ENCODE measurements at regions of chr2 and their contacts with region 1.

Region 1: DNA sequence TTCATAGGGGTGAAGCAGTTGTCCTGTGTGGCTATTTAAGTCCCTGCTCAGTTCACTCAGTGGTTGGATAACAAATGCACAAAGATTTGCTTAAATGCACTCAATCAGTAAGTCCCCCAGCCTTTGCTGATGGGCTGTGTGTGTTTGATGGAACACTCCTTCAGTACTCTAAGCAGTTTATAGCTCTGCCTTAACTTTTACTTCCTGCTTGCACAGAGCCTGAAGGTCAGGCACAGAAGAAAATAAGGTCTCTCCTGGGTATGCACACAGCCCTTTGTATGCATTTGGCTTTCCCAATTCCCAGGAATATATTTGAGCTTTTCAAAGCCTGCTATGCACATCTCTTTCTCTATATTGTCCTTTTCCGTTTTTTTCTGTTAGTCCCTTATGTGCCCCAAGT is 208.7 kb upstream of the STK17B start:
- DNase-seq: no peak

Region 2: DNA sequence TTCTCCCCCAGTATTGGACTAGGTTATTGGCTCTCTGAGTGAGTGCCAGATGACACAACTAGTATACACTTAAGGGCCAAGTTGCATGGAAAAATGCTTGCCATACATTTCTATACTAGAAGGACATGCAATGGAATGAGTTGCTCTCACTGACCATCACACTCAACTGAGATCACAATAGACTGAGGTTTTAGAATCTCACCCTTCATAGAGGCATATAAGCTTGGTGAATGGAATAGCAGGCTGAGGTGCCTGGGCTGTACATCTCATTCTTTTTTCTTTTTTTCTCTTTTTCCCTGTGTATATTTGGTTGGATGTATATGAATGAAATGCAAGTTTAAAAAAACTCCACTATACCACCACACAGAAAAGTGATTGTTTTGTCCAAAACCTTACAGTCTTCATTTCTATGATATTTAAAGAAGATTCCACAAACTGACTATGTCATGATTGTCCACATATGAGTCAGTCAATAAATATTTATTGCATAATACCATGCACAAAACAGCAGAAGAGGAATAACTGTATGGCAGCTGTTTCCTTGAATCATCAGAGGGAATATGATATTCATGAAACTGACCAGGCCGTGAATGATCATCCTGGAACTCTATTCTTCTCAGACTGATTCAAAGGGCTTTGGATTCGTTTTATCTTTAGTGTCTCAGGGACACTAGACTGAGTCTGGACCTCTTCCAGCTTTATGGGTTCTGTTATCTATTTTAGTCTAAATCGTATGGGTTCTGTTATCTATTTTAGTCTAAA is 86.2 kb before region 1 on chr2:
- intact Hi-C with region 1: no loop called
- DNase-seq: no peak

Region 3: DNA sequence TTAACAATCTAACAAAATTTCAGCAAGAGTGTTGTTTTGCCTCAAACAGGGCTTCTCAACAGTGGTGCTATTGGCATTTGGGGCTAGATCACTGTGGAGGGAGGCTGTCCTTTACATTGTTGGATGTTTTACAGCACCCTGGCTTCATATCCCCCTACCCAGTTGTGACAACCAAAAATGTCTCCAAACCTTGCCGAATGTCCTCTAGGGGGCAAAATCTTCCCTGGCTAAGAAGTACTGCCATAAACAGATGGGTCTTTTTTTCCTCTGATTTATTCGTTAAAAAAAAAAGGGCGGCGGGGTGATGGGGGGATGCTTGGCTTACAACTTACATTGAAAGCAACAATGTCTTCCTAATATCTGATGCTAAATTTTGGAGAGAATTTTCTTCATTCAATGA is 51.9 kb after region 1 on chr2:
- intact Hi-C with region 1: no loop called
- DNase-seq: no peak

Region 4: DNA sequence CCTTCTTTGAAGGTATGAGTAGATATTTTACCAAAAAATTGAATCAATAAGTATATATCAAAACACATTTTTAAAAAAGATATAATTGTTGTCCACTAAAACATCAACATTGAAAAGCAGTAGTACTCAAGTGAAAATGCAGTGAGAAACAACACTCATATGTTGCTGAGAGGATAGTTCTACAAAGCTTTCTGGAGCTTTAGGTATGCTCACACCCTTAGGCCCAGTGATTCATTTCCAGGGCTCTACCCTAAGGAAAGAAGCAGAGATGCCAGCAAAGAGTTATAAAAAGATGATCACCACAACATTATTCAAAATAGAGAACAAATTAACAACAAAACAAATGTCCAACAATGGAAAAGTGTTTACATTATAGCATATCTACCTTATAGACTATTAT is 62.1 kb after region 1 on chr2:
- intact Hi-C with region 1: loop called in 1 of 2 experiments (anchors 2 kb)
- DNase-seq: no peak

Measured in posterior vena cava (tissue), 2 donors.